Heart right ventricle (tissue), 16 donors: ENCODE measurements at regions of chr20 and their contacts with region 1.

Region 1: DNA sequence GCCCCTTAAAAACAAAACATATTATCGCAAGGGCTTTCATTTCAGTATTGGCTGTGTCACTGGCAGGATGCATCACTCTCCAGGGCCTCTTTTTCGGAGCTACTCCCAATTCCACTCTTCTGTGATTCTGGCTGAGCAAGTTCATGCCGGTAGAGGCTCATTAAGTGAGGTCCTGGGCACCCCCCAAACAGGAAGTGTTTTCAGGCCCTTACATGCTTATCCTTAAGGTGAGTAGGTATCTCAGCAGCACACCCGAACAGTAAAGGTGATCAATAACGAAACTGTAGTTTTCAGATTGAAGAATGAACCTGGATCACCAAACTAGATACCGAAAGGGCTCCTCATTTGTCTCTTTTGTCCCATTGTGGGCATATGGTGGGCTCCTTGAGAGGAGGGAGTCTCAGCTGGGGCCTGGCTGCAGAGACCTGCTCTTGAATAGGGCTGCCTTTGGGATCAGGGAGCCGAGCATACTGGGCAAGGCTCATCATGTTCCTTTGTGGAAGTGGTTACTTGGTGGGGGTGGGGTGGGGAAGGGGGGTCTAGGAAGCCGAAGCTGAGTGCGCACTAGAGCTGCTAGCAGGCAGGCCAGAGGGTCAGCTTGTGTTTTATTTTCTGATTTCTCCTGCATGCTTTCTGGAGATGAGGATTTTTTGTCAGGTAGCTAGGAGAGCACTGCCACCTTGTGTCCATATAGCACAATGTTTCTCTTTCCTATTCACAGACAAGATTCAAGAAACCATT is 65.2 kb downstream of the CDS2 start:
- DNase-seq: peak in 1 of 2 donors; percentile 56
- ATAC-seq: peak in 7 of 8 donors; percentile 68 to 85 (median 79)
- H3K4me3 ChIP-seq: no peak overlapping the region
- H3K27ac ChIP-seq: peak overlapping the region in 9 of 10 donors; percentile 11 to 79 (median 46)
- H3K4me1 ChIP-seq: peaks cover 6 to 32% (median 21%) of the 10 kb centered on the region in 9 donors
- H3K27me3 ChIP-seq: no peaks in the 10 kb centered on the region
- CTCF ChIP-seq: peak; percentile 69 to 87 (median 80)

Region 2: GRCh38 chr20:5126512-5127203 is 65.3 kb before region 1 on chr20 and contains the start of gene CDS2:
- intact Hi-C with region 1: loop called (anchors 1 to 5 kb)
- DNase-seq: peak; percentile 100
- ATAC-seq: peak; percentile 97 to 99 (median 97)
- H3K4me3 ChIP-seq: peak within 1 kb of the TSS; percentile 83 to 98 (median 94)
- H3K27ac ChIP-seq: peak within 1 kb of the TSS; percentile 89 to 99 (median 98)
- H3K4me1 ChIP-seq: peaks cover 7 to 60% (median 48%) of the 10 kb centered on the region in 9 donors
- H3K27me3 ChIP-seq: no peaks in the 10 kb centered on the region
- CTCF ChIP-seq: peak; percentile 54 to 90 (median 71)
- total RNA-seq, gene CDS2: 67.5 to 100 (median 85.7) TPM